Activated CD4-positive, alpha-beta T cell treated with anti-CD3 and anti-CD28 coated beads for 36 hours (primary cell): ENCODE measurements at regions of chr3 and their contacts with region 1.

Region 1: GRCh38 chr3:196684548-196685407 is 27.3 kb downstream of the CEP19 start:
- DNase-seq: peak; percentile 77
- ATAC-seq: peak; percentile 93
- H3K4me3 Mint-ChIP-seq: peak overlapping the region; percentile 13
- H3K27ac Mint-ChIP-seq: peak overlapping the region; percentile 75
- H3K4me1 Mint-ChIP-seq: peaks cover 12% of the 10 kb centered on the region
- H3K27me3 Mint-ChIP-seq: no peaks in the 10 kb centered on the region

Region 2: GRCh38 chr3:196528639-196529233 is 156.0 kb before region 1 on chr3:
- CTCF ChIA-PET with region 1: interaction called, 18 read pairs
- POLR2A ChIA-PET with region 1: no interaction called
- intact Hi-C with region 1: no loop called
- DNase-seq: peak; percentile 93
- ATAC-seq: peak; percentile 94
- H3K4me3 Mint-ChIP-seq: peak overlapping the region; percentile 74
- H3K27ac Mint-ChIP-seq: peak overlapping the region; percentile 72
- H3K4me1 Mint-ChIP-seq: peaks cover 8% of the 10 kb centered on the region
- H3K27me3 Mint-ChIP-seq: peaks cover 2% of the 10 kb centered on the region

Region 3: DNA sequence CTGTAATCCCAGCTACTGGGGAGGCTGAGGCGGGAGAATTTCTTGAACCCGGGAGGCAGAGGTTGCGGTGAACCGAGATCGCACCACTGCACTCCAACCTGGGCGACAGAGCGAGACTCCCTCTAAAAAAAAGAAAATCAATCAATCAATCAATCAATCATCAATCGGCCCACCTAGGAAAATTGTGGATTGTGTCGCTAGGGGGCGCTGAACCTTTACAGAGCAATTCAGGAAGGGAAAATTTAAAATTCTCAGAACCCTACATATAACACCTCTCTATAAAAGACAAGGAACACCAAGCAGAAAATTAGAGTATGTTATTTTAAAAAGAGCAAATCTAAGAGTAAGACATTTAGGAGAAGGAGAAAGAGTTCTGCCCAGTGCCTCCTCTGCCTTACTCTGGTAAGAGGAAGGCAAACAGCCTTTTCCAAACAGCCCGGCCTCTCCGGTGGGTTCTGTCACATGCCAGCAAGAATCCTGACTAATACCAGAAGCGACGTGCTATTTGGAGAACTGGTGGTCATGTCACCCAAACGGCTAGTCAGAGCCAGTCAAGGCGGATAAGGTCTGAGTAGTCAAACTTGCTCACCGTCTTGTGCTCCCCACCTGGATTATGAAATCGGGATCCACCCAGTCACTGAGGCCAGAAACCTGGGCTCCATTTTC is 147.3 kb before region 1 on chr3:
- CTCF ChIA-PET with region 1: interaction called, 3 read pairs
- POLR2A ChIA-PET with region 1: no interaction called
- intact Hi-C with region 1: loop called (anchors 1 to 5 kb)
- DNase-seq: peak; percentile 83
- ATAC-seq: no peak
- H3K4me3 Mint-ChIP-seq: no peak overlapping the region
- H3K27ac Mint-ChIP-seq: no peak overlapping the region
- H3K4me1 Mint-ChIP-seq: no peaks in the 10 kb centered on the region
- H3K27me3 Mint-ChIP-seq: peaks cover 2% of the 10 kb centered on the region

Region 4: GRCh38 chr3:196632046-196632751 is 52.6 kb before region 1 on chr3:
- CTCF ChIA-PET with region 1: interaction called, 5 read pairs
- POLR2A ChIA-PET with region 1: no interaction called
- intact Hi-C with region 1: loop called in 1 of 2 experiments (anchors 2 kb)
- DNase-seq: peak; percentile 93
- ATAC-seq: peak; percentile 80
- H3K4me3 Mint-ChIP-seq: peak overlapping the region; percentile 81
- H3K27ac Mint-ChIP-seq: peak overlapping the region; percentile 95
- H3K4me1 Mint-ChIP-seq: peaks cover 55% of the 10 kb centered on the region
- H3K27me3 Mint-ChIP-seq: no peaks in the 10 kb centered on the region

Region 5: DNA sequence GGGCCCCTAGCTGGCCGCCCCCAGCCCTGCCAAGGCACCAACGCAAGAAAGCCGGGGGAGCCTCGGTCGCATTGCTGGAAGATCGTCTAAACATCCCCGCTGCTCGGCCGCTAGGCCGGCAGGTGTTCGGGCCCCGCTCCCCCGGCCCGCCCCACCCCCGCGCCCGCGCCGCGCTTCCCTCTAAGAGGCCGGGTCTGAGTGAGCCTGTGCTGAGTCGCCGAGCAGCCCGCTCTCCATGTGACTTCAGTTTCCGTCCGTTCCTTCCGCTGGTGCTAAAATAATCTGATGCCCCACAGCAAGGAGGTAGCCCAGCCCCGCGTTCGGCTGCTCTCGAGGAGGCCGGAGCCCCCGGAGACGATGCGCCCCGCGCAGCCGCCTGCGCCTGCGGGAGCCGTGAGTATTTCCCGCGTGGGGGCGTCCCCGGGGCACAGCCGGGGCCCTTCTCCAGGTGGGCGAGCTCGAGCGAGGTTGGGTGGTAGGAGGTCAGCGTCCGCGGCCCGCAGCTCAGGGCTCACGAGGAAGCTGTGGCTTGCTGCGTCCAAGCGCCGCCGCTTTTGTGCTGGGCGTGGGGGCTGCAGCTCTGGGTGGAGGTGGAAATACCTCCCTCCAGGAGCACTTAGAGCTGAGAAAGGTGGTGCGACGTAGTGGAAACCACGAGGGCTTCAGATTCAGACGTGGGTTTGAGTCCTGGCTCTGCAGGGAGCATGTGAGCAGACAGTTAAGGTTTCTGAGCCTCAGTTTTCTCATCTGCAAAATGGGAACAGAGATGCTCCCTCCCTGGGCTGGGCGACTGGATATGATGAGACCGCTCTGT is 45.1 kb before region 1 on chr3 and contains the start of gene NRROS:
- CTCF ChIA-PET with region 1: interaction called, 10 read pairs
- POLR2A ChIA-PET with region 1: no interaction called
- intact Hi-C with region 1: loop called (anchors 2 to 5 kb)
- DNase-seq: peak; percentile 86
- ATAC-seq: peak; percentile 65
- H3K4me3 Mint-ChIP-seq: peak within 1 kb of the TSS; percentile 81
- H3K27ac Mint-ChIP-seq: peak within 1 kb of the TSS; percentile 98
- H3K4me1 Mint-ChIP-seq: peaks cover 62% of the 10 kb centered on the region
- H3K27me3 Mint-ChIP-seq: no peaks in the 10 kb centered on the region
- total RNA-seq, gene NRROS: 19.6 to 19.7 TPM

Region 6: GRCh38 chr3:196837819-196838420 is 153.1 kb after region 1 on chr3:
- CTCF ChIA-PET with region 1: no interaction called
- POLR2A ChIA-PET with region 1: no interaction called
- intact Hi-C with region 1: no loop called
- DNase-seq: peak; percentile 87
- ATAC-seq: peak; percentile 94
- H3K4me3 Mint-ChIP-seq: no peak overlapping the region
- H3K27ac Mint-ChIP-seq: no peak overlapping the region
- H3K4me1 Mint-ChIP-seq: no peaks in the 10 kb centered on the region
- H3K27me3 Mint-ChIP-seq: no peaks in the 10 kb centered on the region

Region 7: DNA sequence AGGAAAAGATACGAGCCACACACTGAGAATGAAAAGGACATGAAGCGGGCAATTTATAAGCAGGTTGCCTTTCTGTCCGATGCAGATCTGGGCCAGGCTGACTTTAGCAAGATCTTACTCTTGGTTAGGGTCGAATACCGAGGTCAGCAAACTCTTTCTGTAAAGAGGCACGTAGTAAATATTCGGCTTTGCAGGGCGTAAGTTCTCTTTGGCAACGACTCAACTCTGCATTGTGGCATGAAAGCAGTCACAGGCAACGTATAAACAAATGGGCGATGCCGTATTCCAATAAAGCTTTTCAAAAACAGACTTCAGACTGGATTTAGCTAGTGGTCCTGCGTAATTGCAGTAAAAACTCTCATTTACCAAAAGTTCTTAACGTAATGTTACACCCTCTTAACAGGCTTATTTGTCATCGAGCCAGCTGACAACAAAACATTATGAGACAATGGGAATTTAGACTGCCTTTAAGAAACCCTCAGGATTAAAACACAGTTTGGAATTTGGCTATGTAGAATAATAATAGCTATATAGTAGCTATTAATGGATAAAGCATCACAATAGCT is 1252.1 kb after region 1 on chr3:
- CTCF ChIA-PET with region 1: no interaction called
- POLR2A ChIA-PET with region 1: no interaction called
- intact Hi-C with region 1: no loop called
- DNase-seq: no peak
- ATAC-seq: no peak
- H3K4me3 Mint-ChIP-seq: no peak overlapping the region
- H3K27ac Mint-ChIP-seq: no peak overlapping the region
- H3K4me1 Mint-ChIP-seq: peaks cover 6% of the 10 kb centered on the region
- H3K27me3 Mint-ChIP-seq: no peaks in the 10 kb centered on the region